GM10248 (cell line): ENCODE measurements at regions of chr19 and their contacts with region 1.

Region 1: DNA sequence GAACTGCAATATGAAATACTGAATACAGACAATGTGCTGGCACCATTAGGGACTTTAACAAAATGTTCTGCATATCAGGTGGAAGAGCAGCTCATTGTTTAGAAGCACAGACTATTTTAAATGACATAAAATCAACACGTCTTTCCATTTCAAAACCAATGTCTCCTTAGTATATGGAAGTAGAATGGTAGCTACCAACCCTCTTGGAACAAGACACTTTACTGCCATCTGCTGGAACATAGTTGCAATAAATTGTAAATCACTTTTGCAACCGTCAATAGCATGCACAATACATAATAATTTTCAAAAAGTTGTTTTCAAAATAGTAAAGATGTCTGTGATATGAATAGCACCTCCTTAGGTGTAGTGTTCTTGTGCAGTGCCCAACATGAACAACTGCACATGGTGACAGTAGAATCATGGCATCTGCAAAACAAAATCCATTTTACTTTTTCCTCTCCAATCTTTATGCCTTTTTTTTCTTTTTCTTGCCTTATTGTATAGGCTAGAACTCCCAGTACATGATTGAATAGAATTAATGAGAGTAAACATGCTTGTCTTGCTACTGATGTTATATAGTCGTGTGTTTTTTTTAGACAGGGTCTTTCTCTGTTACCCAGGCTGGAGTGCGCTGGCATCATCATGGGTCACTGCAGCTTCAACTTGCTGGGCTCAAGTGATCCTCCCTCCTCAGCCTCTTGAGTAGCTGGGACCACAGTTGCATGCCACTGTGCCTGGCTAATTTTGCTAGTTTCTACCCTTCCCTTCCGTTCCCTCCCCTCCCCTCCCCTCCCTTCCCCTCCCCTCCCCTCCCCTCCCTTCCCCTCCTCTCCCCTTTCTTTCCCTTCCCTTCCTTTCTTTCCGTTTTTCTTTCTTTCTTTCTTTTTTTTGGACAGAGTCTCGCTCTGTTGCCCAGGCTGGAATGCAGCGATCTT is 7.8 kb upstream of the LYPD5 start:
- DNase-seq: peak; percentile 56
- CTCF ChIP-seq: peak; percentile 59

Region 2: GRCh38 chr19:43668406-43669158 is 141.4 kb before region 1 on chr19:
- CTCF ChIA-PET with region 1: interaction called, 17 read pairs
- POLR2A ChIA-PET with region 1: no interaction called
- DNase-seq: peak; percentile 98
- CTCF ChIP-seq: no peak

Region 3: DNA sequence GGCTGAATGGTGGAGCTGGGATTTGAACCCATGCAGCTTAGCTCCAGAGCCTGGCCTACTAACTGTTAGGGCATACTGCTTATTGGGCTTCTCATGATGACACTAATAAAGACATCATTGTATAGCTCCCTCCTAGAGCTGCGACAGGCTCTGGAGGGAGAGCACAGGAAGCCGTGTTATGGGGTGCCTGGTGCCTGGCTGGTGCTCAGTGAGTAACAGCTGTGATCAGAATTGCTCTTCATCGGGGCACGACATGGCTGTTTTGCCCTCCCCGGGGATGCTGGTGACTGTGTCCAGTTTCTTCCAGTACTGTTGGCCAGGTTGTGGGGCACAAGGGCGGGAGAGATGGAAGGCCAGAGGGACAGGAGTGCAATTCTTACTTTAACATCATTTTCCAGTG is 12.9 kb before region 1 on chr19:
- CTCF ChIA-PET with region 1: interaction called, 11 read pairs
- POLR2A ChIA-PET with region 1: no interaction called
- DNase-seq: no peak
- CTCF ChIP-seq: no peak

Region 4: DNA sequence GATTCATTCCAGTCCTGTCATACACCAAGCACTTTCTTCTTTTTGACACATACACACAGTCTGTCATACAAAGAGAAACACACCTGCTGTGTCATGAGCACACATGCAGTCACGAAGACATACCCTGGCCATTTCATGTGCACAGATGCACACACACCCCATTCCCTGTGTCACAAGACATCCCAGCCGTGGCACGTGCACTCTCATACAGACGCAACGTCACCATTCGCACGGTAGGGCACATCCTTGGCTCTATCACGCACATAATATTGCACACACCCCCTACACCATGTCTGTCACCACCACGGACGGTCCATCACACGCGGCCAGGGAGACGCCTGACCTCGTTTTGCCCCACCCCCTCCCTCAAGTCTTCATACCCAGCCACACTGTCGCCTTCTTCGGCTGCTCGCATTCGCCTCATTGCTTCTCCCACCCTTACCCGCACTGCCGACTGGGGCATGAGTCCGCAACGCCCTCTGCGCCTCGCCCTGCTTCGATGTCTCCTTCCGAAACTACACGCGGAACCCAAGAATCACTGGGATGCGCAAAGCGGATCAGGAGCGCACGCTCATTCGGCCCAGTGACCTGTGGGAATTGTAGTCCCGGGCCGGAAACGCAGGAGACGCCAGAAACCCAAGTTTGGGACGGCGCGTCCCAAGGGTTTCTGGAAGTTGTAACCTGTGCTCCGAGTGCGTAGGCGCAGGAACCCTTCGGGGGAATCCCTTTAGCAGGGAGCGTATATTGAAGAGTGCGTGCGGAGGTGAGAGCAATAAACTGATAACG is 10.3 kb after region 1 on chr19:
- CTCF ChIA-PET with region 1: interaction called, 12 read pairs
- POLR2A ChIA-PET with region 1: no interaction called
- DNase-seq: peak; percentile 38
- CTCF ChIP-seq: no peak

Region 5: DNA sequence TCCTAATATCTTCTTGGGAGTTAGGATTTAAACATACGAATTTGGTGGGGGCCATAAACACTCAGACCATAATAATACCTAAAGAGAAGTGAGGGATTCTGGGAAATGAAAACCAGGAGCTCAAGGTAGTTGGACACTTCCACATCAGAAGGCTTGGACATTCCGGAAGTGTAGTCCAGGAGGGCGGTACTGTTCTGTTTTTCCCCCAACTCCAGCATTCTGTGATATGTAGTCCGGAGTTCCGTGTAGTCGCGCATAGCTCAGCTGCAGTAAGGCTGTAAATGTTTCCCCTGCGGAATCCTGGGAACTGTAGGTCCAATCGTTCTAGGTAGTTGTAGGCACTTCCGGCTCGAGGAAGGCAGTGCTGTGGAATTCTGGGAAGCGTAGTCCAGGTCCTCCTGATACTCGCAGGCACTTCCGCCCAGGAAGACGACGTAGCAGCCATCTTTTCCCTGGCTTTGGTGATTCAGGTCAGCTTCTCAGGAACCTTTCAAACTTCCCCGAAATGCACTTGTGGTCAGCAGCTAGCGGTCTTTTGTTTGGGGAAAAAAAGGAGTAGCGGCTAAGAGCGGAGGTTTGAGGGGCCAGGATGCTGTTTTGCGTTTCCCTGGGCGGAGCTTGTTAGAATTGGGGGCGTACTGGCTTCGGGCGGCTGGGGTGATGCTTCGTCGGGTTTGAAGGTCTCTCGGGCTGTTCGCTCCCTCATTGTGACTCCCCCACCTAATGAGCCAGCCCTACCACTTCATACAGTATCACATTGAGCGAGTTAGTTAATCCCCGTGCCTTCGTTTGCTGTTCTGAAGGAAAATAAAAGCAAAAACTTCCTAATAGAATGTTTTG is 354.9 kb after region 1 on chr19 and contains the start of gene ZNF226:
- CTCF ChIA-PET with region 1: no interaction called
- POLR2A ChIA-PET with region 1: no interaction called
- DNase-seq: peak; percentile 84
- CTCF ChIP-seq: no peak